PC-9 (cell line): ENCODE measurements at regions of chr1 and their contacts with region 1.

Region 1: DNA sequence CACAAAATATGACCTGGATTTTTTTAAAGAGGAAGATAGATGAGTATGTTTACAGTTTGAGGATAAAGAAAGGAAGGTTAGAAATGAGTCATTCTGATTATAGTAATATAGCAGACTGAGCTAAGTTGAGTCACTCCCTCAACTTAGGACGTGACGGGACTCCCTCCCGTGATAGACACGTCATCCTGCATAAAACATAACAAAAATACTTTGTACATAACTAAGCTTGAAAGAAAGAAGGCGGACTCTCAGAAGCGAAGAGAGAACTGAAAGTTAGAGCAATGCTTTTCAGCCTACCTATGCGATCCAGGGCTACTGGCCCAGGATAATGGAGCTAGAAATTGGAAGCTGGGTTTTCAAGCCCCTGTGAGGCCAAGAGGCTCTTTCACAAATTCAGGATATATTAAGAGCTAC is 53.0 kb upstream of the DESI2 start:
- DNase-seq: peak; percentile 43 to 91
- H3K4me3 ChIP-seq: peak overlapping the region; percentile 57; the same call in 1 of the 2 replicates
- H3K27ac ChIP-seq: peak overlapping the region; percentile 79
- H3K4me1 ChIP-seq: peaks cover 18% of the 10 kb centered on the region
- H3K27me3 ChIP-seq: no peaks in the 10 kb centered on the region
- CTCF ChIP-seq: no peak

Region 2: DNA sequence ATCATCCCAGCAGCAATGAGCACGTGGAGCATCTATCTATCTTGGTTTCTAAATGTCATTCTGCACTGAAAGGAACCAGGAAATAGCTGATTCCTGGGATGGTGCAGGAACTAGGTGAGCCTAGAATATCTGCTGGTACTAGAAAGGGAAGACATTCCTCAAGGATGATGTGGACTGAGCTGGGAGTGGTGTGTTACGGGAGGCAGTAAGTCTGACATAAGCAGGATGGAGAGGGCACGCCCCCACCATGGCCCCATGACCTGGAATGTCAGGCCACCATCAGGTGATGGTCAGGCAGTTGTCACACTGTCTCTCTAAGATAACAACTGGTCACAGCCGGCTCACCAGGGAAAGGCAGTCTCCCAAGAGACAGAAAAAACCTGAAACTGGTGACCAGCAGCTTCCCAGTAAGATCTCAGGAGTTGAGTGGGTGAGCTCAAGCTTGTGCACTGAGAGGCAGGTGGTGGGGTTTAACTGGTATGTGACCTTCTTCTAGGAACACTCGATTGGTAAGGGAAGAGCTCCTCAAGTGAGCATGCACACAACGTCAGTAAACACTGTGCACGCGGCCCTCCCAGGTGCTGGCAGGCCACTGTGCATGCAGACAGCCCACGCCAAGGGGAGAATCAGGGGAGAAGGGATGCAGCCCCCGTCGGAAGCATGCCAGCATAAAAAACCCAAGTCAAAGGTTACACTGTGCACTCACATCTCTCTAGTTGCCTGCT is 296.9 kb before region 1 on chr1:
- CTCF ChIA-PET with region 1: no interaction called
- POLR2A ChIA-PET with region 1: no interaction called
- intact Hi-C with region 1: loop called (anchors 1 kb)
- DNase-seq: peak; percentile 84 to 92
- H3K4me3 ChIP-seq: no peak overlapping the region
- H3K27ac ChIP-seq: peak overlapping the region; percentile 69
- H3K4me1 ChIP-seq: peaks cover 39% of the 10 kb centered on the region
- H3K27me3 ChIP-seq: no peaks in the 10 kb centered on the region
- CTCF ChIP-seq: no peak

Region 3: GRCh38 chr1:244545511-244545910 is 54.4 kb before region 1 on chr1:
- CTCF ChIA-PET with region 1: no interaction called
- POLR2A ChIA-PET with region 1: no interaction called
- intact Hi-C with region 1: no loop called
- DNase-seq: no peak
- H3K4me3 ChIP-seq: no peak overlapping the region
- H3K27ac ChIP-seq: no peak overlapping the region
- H3K4me1 ChIP-seq: no peaks in the 10 kb centered on the region
- H3K27me3 ChIP-seq: no peaks in the 10 kb centered on the region
- CTCF ChIP-seq: no peak

Region 4: DNA sequence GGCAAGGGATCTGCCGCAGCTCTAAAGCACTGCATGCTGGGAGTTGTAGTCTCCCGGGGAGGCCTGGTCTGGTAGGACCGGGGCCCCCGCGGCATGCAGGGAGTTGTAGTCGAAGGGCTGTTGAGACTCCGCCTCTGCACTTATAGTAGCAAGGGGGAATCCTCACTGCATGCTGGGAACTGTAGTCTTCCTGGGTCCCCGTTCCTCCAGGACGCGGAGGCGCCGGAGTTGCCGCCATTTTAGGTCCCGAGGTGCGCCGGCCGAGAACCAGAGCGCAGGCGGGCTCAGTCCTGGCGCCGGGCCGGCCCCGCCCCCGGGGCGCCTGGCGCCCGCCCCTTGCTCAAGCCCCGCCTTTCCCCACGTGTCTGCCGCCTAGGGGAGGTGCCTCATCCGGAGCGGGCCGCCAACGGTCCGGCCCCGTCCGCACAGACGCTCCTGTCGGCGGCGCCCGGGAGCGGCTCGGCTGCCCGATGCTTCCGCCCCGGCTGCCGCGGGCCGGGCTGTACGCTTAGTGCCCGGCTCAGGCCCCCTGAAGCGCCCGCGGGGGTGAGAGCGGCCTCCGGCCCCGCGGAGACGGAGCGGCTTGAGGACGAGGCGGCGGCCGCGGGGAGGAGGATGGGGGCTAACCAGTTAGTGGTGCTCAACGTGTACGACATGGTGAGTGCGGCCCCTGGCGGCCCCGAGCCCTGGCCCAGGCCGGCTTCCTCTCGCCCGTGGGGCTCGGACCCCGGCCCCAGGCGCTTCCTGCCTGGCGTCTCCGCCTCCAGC is 52.9 kb after region 1 on chr1 and contains the start of gene DESI2:
- CTCF ChIA-PET with region 1: no interaction called
- POLR2A ChIA-PET with region 1: no interaction called
- intact Hi-C with region 1: loop called (anchors 2 kb)
- DNase-seq: peak; percentile 96 to 97
- H3K4me3 ChIP-seq: peak within 1 kb of the TSS; percentile 76
- H3K27ac ChIP-seq: peak within 1 kb of the TSS; percentile 48
- H3K4me1 ChIP-seq: peaks cover 28% of the 10 kb centered on the region
- H3K27me3 ChIP-seq: no peaks in the 10 kb centered on the region
- CTCF ChIP-seq: peak; percentile 68; the same call in 1 of the 2 replicates
- total RNA-seq, gene DESI2: 34.1 and 45.8 TPM in 2 replicates

Region 5: GRCh38 chr1:244801246-244801645 is 201.3 kb after region 1 on chr1:
- CTCF ChIA-PET with region 1: interaction called, 6 read pairs
- POLR2A ChIA-PET with region 1: no interaction called
- intact Hi-C with region 1: loop called (anchors 1 kb)
- DNase-seq: peak in 1 of 2 experiments; percentile 10
- H3K4me3 ChIP-seq: no peak overlapping the region
- H3K27ac ChIP-seq: no peak overlapping the region
- H3K4me1 ChIP-seq: no peaks in the 10 kb centered on the region
- H3K27me3 ChIP-seq: no peaks in the 10 kb centered on the region
- CTCF ChIP-seq: peak; percentile 76

Region 6: DNA sequence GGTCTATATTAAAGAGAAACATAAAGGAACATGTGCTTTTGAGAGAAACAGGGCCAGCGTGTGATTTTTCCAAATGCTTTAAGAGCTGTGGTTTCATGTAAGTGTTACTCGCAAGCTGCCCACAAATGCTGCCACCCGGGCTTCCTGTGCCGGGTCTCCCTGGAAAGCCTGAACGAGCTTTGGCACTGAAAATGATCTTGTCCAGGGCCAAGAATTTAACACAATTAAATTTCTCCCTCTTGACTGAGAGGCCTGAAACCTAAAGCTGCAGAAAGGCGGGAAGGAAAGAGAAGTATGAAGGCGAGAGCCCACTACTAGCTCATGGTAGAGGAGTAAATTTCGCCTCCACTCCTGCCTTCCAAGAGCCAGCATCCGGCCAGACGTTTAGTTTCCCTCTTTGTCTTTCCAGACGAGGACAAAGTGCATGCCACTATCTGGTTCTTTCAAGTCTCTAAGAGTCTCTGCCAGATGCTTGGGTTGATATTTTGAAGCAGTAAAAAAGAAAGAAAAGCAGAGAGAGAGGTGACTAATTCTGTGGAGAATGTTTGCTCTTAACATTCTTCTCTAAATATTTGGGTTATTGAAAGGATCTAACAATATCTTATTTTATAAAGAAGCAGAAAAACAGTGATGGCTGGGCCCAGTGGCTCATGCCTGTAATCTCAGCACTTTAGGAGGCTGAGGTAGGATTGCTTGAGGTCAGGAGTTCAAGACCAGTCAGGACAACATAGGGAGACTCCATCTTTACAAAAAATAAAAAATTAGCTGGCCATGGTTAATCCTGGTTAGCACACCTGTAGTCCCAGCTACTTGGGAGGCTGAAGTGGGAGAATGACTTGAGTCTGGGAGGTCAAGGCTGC is 364.4 kb after region 1 on chr1:
- CTCF ChIA-PET with region 1: no interaction called
- POLR2A ChIA-PET with region 1: no interaction called
- intact Hi-C with region 1: loop called (anchors 5 kb)
- DNase-seq: peak; percentile 49 to 75
- H3K4me3 ChIP-seq: no peak overlapping the region
- H3K27ac ChIP-seq: peak overlapping the region; percentile 8; the same call in 1 of the 2 replicates
- H3K4me1 ChIP-seq: peaks cover 33% of the 10 kb centered on the region
- H3K27me3 ChIP-seq: no peaks in the 10 kb centered on the region
- CTCF ChIP-seq: no peak